ENCODE measurements at regions of chr11 and their contacts with region 1.

Region 1: GRCh38 chr11:72413914-72414628 is 20.3 kb downstream of the CLPB start:
- DNase-seq: peak; percentile 81
- H3K4me3 ChIP-seq: no peak overlapping the region
- H3K27ac ChIP-seq: no peak overlapping the region
- H3K4me1 ChIP-seq: no peaks in the 10 kb centered on the region
- H3K27me3 ChIP-seq: no peaks in the 10 kb centered on the region
- CTCF ChIP-seq: peak; percentile 90 to 92
- POLR2A ChIP-seq: no peak

Region 2: DNA sequence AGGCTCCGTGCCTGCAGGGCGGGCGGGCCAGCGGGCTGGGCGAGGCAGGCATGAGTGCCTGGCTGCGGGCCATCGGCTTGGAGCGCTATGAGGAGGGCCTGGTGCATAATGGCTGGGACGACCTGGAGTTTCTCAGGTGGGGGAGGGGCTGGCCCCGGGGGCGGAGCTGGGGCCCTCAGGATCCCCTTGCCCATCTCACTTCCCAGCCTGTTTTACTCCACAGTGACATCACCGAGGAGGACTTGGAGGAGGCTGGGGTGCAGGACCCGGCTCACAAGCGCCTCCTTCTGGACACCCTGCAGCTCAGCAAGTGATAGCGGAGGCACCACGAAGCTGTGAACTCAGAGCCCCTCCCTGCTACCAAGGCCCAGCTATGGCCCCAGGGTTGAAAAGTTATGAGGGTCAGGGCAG is 176.0 kb before region 1 on chr11:
- CTCF ChIA-PET with region 1: interaction called, 7 read pairs
- POLR2A ChIA-PET with region 1: no interaction called
- dilution Hi-C with region 1: no loop called
- intact Hi-C with region 1: loop called (anchors 1 kb)
- DNase-seq: peak; percentile 51
- H3K4me3 ChIP-seq: no peak overlapping the region
- H3K27ac ChIP-seq: no peak overlapping the region
- H3K4me1 ChIP-seq: peaks cover 12% of the 10 kb centered on the region
- H3K27me3 ChIP-seq: peaks cover 28 to 37% of the 10 kb centered on the region in 2 experiments
- CTCF ChIP-seq: peak; percentile 77 to 85
- POLR2A ChIP-seq: peak; percentile 45

Region 3: DNA sequence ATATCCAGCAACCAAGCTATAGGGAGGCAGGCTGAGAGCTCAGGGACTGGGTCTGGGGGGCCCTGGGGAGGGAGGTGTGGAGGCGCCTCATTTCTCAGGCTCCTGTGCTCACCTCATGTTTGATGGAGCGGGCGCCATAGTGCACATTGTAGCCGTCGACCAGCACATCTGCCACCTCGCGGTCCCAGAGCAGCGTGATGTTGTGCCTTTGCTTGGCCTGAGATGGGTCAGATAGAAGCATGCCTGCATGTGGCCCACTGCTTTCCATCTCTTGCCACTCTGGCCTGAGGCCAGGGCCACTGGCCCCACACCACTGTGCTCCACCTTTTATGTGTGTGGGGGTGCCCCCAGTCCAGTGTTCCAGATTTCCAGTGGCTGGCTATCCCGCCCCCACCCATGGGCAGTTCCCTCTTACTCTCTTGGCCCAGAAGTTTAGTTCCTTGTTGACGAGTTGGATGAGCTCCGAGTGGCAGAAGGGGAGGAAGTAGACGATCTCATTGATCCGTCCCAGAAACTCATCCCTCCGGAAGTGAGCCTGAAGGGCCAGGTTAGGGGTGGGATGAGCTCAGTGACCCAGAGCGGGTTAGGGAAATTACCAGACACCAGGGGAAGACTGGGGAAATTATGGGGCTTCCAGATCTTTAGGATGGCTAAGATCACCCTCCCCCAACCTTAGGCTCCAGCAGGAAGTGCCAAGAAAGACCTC is 120.0 kb before region 1 on chr11:
- CTCF ChIA-PET with region 1: interaction called, 5 read pairs
- POLR2A ChIA-PET with region 1: no interaction called
- dilution Hi-C with region 1: no loop called
- intact Hi-C with region 1: loop called (anchors 1 kb)
- DNase-seq: no peak
- H3K4me3 ChIP-seq: no peak overlapping the region
- H3K27ac ChIP-seq: no peak overlapping the region
- H3K4me1 ChIP-seq: no peaks in the 10 kb centered on the region
- H3K27me3 ChIP-seq: no peaks in the 10 kb centered on the region
- CTCF ChIP-seq: no peak
- POLR2A ChIP-seq: no peak

Region 4: GRCh38 chr11:72317982-72318381 is 96.1 kb before region 1 on chr11:
- CTCF ChIA-PET with region 1: interaction called, 15 read pairs
- POLR2A ChIA-PET with region 1: no interaction called
- dilution Hi-C with region 1: no loop called
- intact Hi-C with region 1: no loop called
- DNase-seq: no peak
- H3K4me3 ChIP-seq: no peak overlapping the region
- H3K27ac ChIP-seq: no peak overlapping the region
- H3K4me1 ChIP-seq: no peaks in the 10 kb centered on the region
- H3K27me3 ChIP-seq: no peaks in the 10 kb centered on the region
- CTCF ChIP-seq: no peak
- POLR2A ChIP-seq: no peak

Measured in endothelial cell of umbilical vein (primary cell).